Activated naive CD4-positive, alpha-beta T cell treated with anti-CD3 and anti-CD28 coated beads for 36 hours (primary cell): ENCODE measurements at regions of chrX and their contacts with region 1.

Region 1: DNA sequence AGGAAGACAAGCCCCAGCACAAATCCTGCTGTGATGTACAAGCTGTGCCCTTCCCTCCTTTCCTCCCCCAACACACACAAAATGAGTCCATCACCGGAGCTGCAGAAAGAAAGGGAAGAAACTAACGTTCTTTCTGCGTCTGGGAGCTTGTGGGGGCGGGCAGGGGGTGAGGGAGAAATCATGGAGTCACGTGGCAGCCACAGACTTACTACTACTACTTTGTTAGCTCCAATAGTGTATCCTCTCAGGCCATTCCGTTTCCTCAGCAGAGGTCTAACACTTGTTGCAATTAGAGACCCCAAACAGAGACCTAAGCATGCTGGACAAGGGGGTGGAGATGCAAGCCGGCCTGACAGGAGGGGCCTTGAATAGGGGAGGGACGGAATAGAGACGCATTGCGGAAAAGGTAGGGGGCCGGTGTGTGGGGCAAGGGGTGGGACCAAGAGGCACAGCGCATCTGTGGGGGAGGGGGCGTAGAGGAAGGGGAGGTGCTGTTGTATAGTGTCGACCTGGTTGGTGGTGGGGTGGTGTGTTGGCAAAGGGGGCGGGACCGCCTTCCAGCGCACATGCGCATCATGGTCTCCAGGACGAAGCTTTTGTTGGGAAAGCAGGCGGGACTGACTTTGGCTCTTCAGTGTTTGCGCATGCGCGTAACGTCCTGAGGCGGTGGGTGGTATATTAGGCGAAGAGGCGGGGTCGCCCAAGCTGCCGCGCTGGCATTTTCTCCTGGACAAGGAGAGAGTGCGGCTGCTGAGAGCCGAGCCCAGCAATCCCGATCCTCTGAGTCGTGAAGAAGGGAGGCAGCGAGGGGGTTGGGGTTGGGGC is at the start of gene MAGED1:
- DNase-seq: peak; percentile 90
- H3K4me3 Mint-ChIP-seq: peak within 1 kb of the TSS; percentile 90
- H3K27ac Mint-ChIP-seq: peak within 1 kb of the TSS; percentile 78
- H3K4me1 Mint-ChIP-seq: peaks cover 11% of the 10 kb centered on the region
- H3K27me3 Mint-ChIP-seq: no peaks in the 10 kb centered on the region
- total RNA-seq, gene MAGED1: 33.0 to 34.6 TPM

Region 2: GRCh38 chrX:51496501-51497291 is 396.4 kb before region 1 on chrX and contains the start of gene NUDT11:
- CTCF ChIA-PET with region 1: no interaction called
- intact Hi-C with region 1: loop called (anchors 10 kb)
- DNase-seq: peak; percentile 57
- H3K4me3 Mint-ChIP-seq: peak within 1 kb of the TSS; percentile 79
- H3K27ac Mint-ChIP-seq: no peak within 1 kb of the TSS
- H3K4me1 Mint-ChIP-seq: peaks cover 7% of the 10 kb centered on the region
- H3K27me3 Mint-ChIP-seq: peaks cover 17% of the 10 kb centered on the region
- total RNA-seq, gene NUDT11: 1.1 to 1.5 TPM

Region 3: GRCh38 chrX:51802917-51803688 is 90.0 kb before region 1 on chrX:
- CTCF ChIA-PET with region 1: no interaction called
- intact Hi-C with region 1: loop called (anchors 2 kb)
- DNase-seq: peak; percentile 70
- H3K4me3 Mint-ChIP-seq: peak overlapping the region; percentile 98
- H3K27ac Mint-ChIP-seq: peak overlapping the region; percentile 97
- H3K4me1 Mint-ChIP-seq: peaks cover 21% of the 10 kb centered on the region
- H3K27me3 Mint-ChIP-seq: no peaks in the 10 kb centered on the region

Region 4: DNA sequence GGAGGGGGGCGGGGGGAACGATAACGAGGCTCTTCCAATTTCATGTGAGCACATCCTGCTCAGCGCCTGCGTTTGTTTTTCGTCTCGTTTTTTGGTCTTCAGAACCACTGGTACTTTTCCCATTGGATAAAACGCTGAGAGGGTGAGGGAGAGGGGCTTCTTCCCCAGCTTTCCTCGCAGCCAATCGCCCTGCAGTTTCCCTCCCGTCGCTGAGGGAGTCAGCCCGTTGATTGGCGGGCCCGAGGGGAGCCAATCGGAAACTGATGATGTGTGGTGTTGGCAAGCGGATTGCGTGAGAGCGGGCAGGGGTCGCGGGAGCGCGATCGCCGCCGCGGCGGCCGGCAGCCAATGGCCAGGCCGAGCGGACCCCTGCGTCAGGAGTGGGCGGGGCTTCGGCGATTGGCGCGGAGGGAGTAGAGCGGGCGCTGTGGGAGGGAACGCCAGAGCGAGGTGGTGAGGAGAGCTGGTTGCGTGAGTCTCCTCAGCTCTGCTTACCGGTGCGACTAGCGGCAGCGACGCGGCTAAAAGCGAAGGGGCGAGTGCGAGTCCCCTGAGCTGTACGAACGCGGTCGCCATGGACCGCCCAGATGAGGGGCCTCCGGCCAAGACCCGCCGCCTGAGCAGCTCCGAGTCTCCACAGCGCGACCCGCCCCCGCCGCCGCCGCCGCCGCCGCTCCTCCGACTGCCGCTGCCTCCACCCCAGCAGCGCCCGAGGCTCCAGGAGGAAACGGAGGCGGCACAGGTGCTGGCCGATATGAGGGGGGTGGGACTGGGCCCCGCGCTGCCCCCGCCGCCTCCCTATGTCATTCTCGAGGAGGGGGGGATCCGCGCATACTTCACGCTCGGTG is 1189.0 kb after region 1 on chrX and contains the start of gene TSPYL2:
- CTCF ChIA-PET with region 1: no interaction called
- intact Hi-C with region 1: loop called (anchors 10 kb)
- DNase-seq: peak; percentile 93
- H3K4me3 Mint-ChIP-seq: peak within 1 kb of the TSS; percentile 90
- H3K27ac Mint-ChIP-seq: peak within 1 kb of the TSS; percentile 94
- H3K4me1 Mint-ChIP-seq: peaks cover 48% of the 10 kb centered on the region
- H3K27me3 Mint-ChIP-seq: no peaks in the 10 kb centered on the region
- total RNA-seq, gene TSPYL2: 72.2 to 74.4 TPM